GM10248 (cell line): ENCODE measurements at regions of chr12 and their contacts with region 1.

Region 1: GRCh38 chr12:93098077-93098476 is 169.0 kb upstream of the EEA1 start:
- DNase-seq: no peak
- CTCF ChIP-seq: peak; percentile 53

Region 2: DNA sequence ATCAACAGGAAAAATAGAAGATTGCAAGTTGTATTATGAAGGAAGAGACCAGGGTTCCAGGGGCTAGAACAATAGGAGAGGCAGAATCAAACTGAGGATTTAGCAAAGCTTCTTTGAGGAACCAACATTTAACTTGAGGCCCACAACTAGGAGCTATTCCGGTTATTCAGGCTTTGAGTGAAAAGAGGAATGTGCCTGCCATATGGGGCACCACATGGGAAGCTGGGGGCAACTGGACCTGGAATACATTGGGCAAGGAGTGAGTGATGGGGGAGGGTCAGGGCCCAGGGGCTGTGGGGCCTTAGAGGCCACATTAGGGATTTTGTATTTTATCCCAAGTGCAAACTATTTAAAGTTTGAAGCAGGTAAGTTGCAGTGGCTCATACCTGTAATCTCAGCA is 139.2 kb before region 1 on chr12:
- CTCF ChIA-PET with region 1: no interaction called
- POLR2A ChIA-PET with region 1: no interaction called
- DNase-seq: no peak
- CTCF ChIP-seq: no peak

Region 3: GRCh38 chr12:93025145-93025805 is 72.8 kb before region 1 on chr12:
- CTCF ChIA-PET with region 1: no interaction called
- POLR2A ChIA-PET with region 1: no interaction called
- DNase-seq: peak; percentile 55
- CTCF ChIP-seq: peak; percentile 57

Region 4: GRCh38 chr12:93085383-93086287 is 12.4 kb before region 1 on chr12:
- CTCF ChIA-PET with region 1: interaction called, 14 read pairs
- POLR2A ChIA-PET with region 1: no interaction called
- DNase-seq: no peak
- CTCF ChIP-seq: no peak

Region 5: DNA sequence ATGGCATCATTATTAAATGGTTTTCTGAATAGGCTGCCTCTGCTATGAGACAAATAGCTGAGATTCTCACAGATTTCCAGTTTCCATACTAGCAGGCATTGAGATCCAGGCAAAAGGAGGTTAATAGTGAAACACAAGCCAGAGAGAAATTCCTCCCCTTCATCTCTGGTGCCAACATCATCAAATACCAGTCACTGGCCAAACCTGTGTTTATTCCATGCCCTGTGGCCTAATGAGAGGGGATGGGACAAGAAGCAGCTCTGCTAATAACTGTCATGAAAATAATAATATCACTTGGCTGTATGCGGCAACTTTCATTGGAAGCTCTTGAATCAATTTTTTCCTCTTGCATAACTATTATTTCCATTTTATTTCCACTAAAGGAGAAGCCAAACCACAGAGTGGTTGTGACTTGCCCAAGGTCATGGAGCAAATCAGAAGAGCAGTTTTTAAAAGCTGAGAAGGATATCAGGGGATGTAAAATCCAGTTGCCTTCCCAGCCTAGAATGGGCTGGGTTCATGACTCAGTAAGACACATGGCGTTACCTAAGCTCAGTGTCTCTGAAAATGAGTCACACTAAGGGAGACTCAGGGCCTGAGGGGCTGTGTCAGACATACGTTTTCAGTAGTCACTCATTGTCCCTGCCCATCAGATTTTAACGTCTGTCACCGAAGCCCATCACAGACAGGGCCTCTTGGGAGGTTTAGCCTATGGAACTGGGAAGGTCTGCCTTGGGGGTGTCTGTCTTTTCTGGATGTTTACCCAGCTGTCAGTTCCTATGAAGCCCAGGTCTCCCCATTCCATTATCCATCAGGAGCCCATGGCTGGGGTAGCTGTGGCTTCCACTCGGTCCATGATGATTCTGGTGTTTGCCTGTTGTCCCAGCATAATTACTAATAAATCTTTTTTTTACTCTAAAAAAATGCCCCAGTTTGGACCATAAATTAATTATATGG is 39.9 kb after region 1 on chr12:
- CTCF ChIA-PET with region 1: interaction called, 37 read pairs
- POLR2A ChIA-PET with region 1: no interaction called
- DNase-seq: peak; percentile 42
- CTCF ChIP-seq: no peak

Region 6: GRCh38 chr12:93397412-93397811 is 299.3 kb after region 1 on chr12:
- CTCF ChIA-PET with region 1: interaction called, 10 read pairs
- POLR2A ChIA-PET with region 1: no interaction called
- DNase-seq: no peak
- CTCF ChIP-seq: no peak

Region 7: DNA sequence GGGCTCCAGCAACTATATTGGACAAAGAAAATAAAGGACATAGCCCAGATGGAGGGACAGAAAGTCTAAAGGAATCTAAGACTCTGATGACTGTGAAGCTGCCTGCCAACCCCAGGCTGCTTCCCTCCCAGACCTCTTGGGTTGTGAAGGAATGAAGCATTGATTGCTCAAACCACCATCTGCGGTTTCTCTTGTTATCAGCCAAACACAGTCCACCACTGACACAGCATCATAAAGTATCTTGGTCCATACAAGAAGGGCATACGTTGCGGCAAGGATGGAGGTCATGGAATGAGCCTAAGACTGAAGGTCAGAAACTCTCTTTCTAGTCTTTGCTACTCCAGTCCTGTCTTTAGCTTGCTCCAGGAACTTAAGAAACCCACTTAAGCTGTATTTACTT is 991.8 kb after region 1 on chr12:
- CTCF ChIA-PET with region 1: no interaction called
- POLR2A ChIA-PET with region 1: no interaction called
- DNase-seq: no peak
- CTCF ChIP-seq: no peak